CD4-positive, alpha-beta memory T cell (primary cell): ENCODE measurements at regions of chr14 and their contacts with region 1.

Region 1: DNA sequence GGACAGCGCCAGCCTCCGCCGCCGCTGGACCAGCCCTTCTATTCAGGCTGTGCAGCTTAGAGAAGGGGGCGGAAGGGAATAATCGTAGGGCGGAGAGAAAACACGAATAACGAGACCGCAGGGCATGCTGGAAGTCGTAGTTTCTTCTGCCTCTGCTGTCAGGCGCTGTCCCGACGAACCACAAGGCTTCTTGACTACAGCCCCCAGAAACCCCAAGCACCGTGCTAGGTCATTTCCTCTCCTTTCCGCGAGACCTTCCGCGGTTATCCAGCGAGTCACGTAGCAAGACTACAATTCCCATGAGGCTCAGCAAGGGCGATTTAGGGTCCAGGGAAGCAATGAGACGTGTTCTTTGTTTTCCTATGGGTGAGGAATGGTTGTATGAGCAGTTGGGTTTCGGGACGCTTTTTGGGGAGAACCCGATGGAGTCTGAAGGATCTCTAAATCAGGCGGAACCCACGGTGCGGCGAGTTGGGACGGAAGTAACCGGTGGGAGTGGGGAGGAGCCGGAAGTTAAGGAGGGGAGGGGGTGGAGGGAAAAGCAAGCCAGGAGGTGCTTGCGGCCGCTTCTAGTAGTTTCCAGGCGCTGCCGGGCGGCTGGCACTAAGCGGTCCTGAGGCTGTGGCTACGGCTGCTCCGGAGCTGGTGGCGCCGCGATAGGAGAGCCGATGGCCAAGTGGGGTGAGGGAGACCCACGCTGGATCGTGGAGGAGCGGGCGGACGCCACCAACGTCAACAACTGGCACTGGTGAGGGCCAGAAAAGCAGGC is at the starts of genes AHSA1 and VIPAS39:
- DNase-seq: peak; percentile 96 to 99 (median 96)
- H3K4me3 ChIP-seq: peak within 1 kb of the TSS; percentile 99 to 100
- H3K4me3 Mint-ChIP-seq: peak within 1 kb of the TSS; percentile 100
- H3K27ac ChIP-seq: peak within 1 kb of the TSS; percentile 86
- H3K27ac Mint-ChIP-seq: peak within 1 kb of the TSS; percentile 94 to 100 (median 100)
- H3K4me1 ChIP-seq: peaks cover 29% of the 10 kb centered on the region
- H3K4me1 Mint-ChIP-seq: peaks cover 28 to 50% (median 36%) of the 10 kb centered on the region in 4 donors
- H3K27me3 ChIP-seq: no peaks in the 10 kb centered on the region
- H3K27me3 Mint-ChIP-seq: no peaks in the 10 kb centered on the region
- total RNA-seq, gene AHSA1: 88.5 to 89.9 TPM
- total RNA-seq, gene VIPAS39: 18.6 to 22.5 TPM

Region 2: GRCh38 chr14:76151398-76152339 is 1306.0 kb before region 1 on chr14 and contains the start of gene GPATCH2L:
- CTCF ChIA-PET with region 1: no interaction called
- POLR2A ChIA-PET with region 1: no interaction called
- intact Hi-C with region 1: loop called (anchors 5 kb)
- DNase-seq: peak; percentile 94 to 97 (median 96)
- H3K4me3 ChIP-seq: peak within 1 kb of the TSS; percentile 85 to 88
- H3K4me3 Mint-ChIP-seq: peak within 1 kb of the TSS; percentile 92 to 99 (median 96)
- H3K27ac ChIP-seq: peak within 1 kb of the TSS; percentile 94
- H3K27ac Mint-ChIP-seq: peak within 1 kb of the TSS; percentile 93 to 99 (median 97)
- H3K4me1 ChIP-seq: peaks cover 51% of the 10 kb centered on the region
- H3K4me1 Mint-ChIP-seq: peaks cover 37 to 59% (median 49%) of the 10 kb centered on the region in 4 donors
- H3K27me3 ChIP-seq: no peaks in the 10 kb centered on the region
- H3K27me3 Mint-ChIP-seq: no peaks in the 10 kb centered on the region
- total RNA-seq, gene GPATCH2L: 66.0 to 70.1 TPM

Region 3: GRCh38 chr14:76812211-76813044 is 645.3 kb before region 1 on chr14 and contains the start of gene ANGEL1:
- CTCF ChIA-PET with region 1: no interaction called
- POLR2A ChIA-PET with region 1: no interaction called
- intact Hi-C with region 1: loop called (anchors 1 kb)
- DNase-seq: peak; percentile 94 to 97 (median 96)
- H3K4me3 ChIP-seq: peak within 1 kb of the TSS; percentile 43 to 78
- H3K4me3 Mint-ChIP-seq: peak within 1 kb of the TSS; percentile 87 to 98 (median 94)
- H3K27ac ChIP-seq: peak within 1 kb of the TSS; percentile 76
- H3K27ac Mint-ChIP-seq: peak within 1 kb of the TSS; percentile 93 to 98 (median 95)
- H3K4me1 ChIP-seq: peaks cover 24% of the 10 kb centered on the region
- H3K4me1 Mint-ChIP-seq: peaks cover 21 to 37% (median 28%) of the 10 kb centered on the region in 4 donors
- H3K27me3 ChIP-seq: no peaks in the 10 kb centered on the region
- H3K27me3 Mint-ChIP-seq: peaks cover 0 to 2% of the 10 kb centered on the region in 2 donors
- total RNA-seq, gene ANGEL1: 26.1 to 28.0 TPM

Region 4: GRCh38 chr14:77124345-77125280 is 333.1 kb before region 1 on chr14:
- CTCF ChIA-PET with region 1: no interaction called
- POLR2A ChIA-PET with region 1: no interaction called
- intact Hi-C with region 1: no loop called
- DNase-seq: peak; percentile 72 to 83 (median 79)
- H3K4me3 ChIP-seq: peak overlapping the region; percentile 66 to 82
- H3K4me3 Mint-ChIP-seq: peak overlapping the region; percentile 85 to 92 (median 88)
- H3K27ac ChIP-seq: peak overlapping the region; percentile 45
- H3K27ac Mint-ChIP-seq: peak overlapping the region; percentile 50 to 95 (median 91)
- H3K4me1 ChIP-seq: peaks cover 57% of the 10 kb centered on the region
- H3K4me1 Mint-ChIP-seq: peaks cover 17 to 59% (median 45%) of the 10 kb centered on the region in 4 donors
- H3K27me3 ChIP-seq: no peaks in the 10 kb centered on the region
- H3K27me3 Mint-ChIP-seq: peaks cover 6 to 13% of the 10 kb centered on the region in 2 donors

Region 5: GRCh38 chr14:77376771-77377501 is 80.8 kb before region 1 on chr14 and contains the starts of genes SAMD15 and TMED8:
- CTCF ChIA-PET with region 1: interaction called, 8 read pairs
- POLR2A ChIA-PET with region 1: interaction called, 6 read pairs
- intact Hi-C with region 1: loop called (anchors 1 kb)
- DNase-seq: peak; percentile 81 to 87 (median 87)
- H3K4me3 ChIP-seq: peak within 1 kb of the TSS; percentile 94 to 97
- H3K4me3 Mint-ChIP-seq: peak within 1 kb of the TSS; percentile 85 to 94 (median 90)
- H3K27ac ChIP-seq: peak within 1 kb of the TSS; percentile 74
- H3K27ac Mint-ChIP-seq: peak within 1 kb of the TSS in 6 of 7 donors; percentile 84 to 95 (median 92)
- H3K4me1 ChIP-seq: peaks cover 46% of the 10 kb centered on the region
- H3K4me1 Mint-ChIP-seq: peaks cover 30 to 42% (median 36%) of the 10 kb centered on the region in 4 donors
- H3K27me3 ChIP-seq: no peaks in the 10 kb centered on the region
- H3K27me3 Mint-ChIP-seq: no peaks in the 10 kb centered on the region
- total RNA-seq, gene SAMD15: 0.11 to 0.38 TPM
- total RNA-seq, gene TMED8: 8.3 to 8.6 TPM

Region 6: GRCh38 chr14:77707724-77708408 is 250.2 kb after region 1 on chr14 and contains the starts of genes ALKBH1 and SLIRP:
- CTCF ChIA-PET with region 1: interaction called, 7 read pairs
- POLR2A ChIA-PET with region 1: interaction called, 5 read pairs
- intact Hi-C with region 1: loop called (anchors 1 kb)
- DNase-seq: peak; percentile 87 to 91 (median 87)
- H3K4me3 ChIP-seq: peak within 1 kb of the TSS; percentile 90 to 97
- H3K4me3 Mint-ChIP-seq: peak within 1 kb of the TSS; percentile 95 to 100 (median 98)
- H3K27ac ChIP-seq: peak within 1 kb of the TSS; percentile 80
- H3K27ac Mint-ChIP-seq: peak within 1 kb of the TSS; percentile 83 to 99 (median 96)
- H3K4me1 ChIP-seq: peaks cover 33% of the 10 kb centered on the region
- H3K4me1 Mint-ChIP-seq: peaks cover 26 to 49% (median 38%) of the 10 kb centered on the region in 4 donors
- H3K27me3 ChIP-seq: no peaks in the 10 kb centered on the region
- H3K27me3 Mint-ChIP-seq: no peaks in the 10 kb centered on the region
- total RNA-seq, gene ALKBH1: 16.2 to 20.1 TPM
- total RNA-seq, gene SLIRP: 37.5 to 40.6 TPM

Region 7: DNA sequence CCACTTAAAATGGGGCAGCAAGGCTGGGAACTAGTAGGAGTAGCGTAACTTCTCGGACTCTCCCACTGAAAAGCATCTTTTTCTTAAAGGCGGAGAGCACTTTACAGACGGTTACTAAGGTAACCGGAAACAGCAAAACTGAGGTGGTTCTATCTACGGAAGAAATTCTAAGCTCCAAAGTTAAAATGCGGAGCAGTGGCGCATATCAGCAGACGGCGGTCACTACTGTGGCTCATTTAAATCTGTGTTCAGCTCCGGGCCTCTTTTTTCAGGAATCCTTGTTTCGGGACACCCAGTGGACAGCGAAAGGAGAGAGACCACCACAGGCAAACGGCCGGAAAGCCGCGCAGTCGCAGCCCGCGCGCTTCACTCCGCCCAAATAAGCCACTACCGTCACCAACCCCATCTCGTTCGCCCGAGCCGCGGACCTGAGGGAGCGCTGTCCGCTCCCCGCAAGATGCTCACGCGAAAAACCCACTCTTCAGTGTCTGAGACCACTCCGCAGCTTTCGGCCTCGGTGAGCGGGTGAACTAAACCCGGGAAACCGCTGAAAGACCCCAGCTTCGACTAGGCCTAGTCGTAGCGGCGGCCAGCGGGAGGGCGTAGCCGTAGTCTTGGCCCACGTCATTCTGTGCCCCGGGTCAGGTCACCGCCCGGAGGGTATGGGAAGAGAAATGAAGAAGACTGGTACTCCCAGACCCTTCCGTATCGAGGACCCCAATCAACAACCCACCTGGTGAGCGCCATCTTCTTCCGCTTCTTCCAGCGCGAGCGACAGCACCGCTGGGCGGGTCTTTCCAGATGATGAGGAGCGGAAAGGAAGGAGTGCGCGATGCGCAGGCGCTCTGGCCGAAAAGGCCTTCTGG is 302.9 kb after region 1 on chr14 and contains the start of gene SNW1:
- CTCF ChIA-PET with region 1: no interaction called
- POLR2A ChIA-PET with region 1: interaction called, 4 read pairs
- intact Hi-C with region 1: loop called (anchors 1 kb)
- DNase-seq: peak; percentile 89 to 94 (median 92)
- H3K4me3 ChIP-seq: peak within 1 kb of the TSS; percentile 94 to 98
- H3K4me3 Mint-ChIP-seq: peak within 1 kb of the TSS; percentile 95 to 98 (median 97)
- H3K27ac ChIP-seq: peak within 1 kb of the TSS; percentile 99
- H3K27ac Mint-ChIP-seq: peak within 1 kb of the TSS; percentile 97 to 100 (median 98)
- H3K4me1 ChIP-seq: peaks cover 52% of the 10 kb centered on the region
- H3K4me1 Mint-ChIP-seq: peaks cover 23 to 63% (median 39%) of the 10 kb centered on the region in 4 donors
- H3K27me3 ChIP-seq: no peaks in the 10 kb centered on the region
- H3K27me3 Mint-ChIP-seq: no peaks in the 10 kb centered on the region
- total RNA-seq, gene SNW1: 92.1 to 99.7 TPM

Region 8: DNA sequence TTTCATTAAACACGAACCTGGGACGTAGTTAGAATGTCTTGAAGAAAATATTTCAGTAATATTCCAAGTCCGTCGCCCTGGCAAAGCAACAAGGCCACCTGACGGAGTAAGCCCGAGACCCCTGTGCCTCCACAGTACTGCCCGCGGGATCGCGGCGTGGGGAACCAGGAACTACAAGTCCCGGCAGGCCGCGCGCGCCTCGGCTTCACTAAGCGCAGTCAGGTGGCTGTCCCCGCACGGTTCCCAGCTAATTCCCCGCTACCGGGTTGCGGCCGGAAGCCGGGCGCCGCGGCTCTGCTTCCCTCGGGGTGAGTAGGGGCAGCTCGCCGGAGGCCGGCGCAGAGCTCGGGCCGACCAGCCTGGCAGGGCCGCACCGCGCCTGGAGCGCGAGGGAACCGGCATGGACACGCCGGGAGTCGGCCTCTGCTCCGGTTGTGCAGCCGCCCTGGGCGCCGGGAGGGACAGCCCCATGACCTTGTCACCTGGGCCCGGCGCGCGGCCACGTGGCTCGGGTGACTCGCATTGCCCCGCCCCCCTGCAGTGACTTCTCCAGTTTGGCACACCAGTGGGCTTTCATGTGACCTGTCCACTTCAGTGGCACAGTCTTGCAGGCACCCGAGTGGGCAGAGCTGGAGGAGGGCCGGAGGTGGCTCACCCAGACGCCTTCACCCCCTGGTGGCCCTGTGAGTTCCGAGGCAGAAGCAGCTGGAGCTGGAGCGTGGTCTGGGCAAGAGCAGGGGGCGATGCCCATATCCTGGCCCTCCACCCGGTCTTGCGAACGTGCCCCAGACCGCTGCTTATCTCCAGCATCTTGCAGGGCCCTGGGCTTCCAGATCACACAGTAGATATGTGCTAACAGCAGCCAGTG is 342.4 kb after region 1 on chr14 and contains the start of gene ADCK1:
- CTCF ChIA-PET with region 1: no interaction called
- POLR2A ChIA-PET with region 1: no interaction called
- intact Hi-C with region 1: loop called (anchors 1 kb)
- DNase-seq: peak; percentile 83 to 88 (median 85)
- H3K4me3 ChIP-seq: peak within 1 kb of the TSS; percentile 83 to 87
- H3K4me3 Mint-ChIP-seq: peak within 1 kb of the TSS; percentile 83 to 90 (median 86)
- H3K27ac ChIP-seq: peak within 1 kb of the TSS; percentile 71
- H3K27ac Mint-ChIP-seq: peak within 1 kb of the TSS; percentile 77 to 93 (median 91)
- H3K4me1 ChIP-seq: peaks cover 7% of the 10 kb centered on the region
- H3K4me1 Mint-ChIP-seq: peaks cover 2 to 11% (median 9%) of the 10 kb centered on the region in 4 donors
- H3K27me3 ChIP-seq: no peaks in the 10 kb centered on the region
- H3K27me3 Mint-ChIP-seq: no peaks in the 10 kb centered on the region
- total RNA-seq, gene ADCK1: 5.3 to 5.6 TPM

Region 9: DNA sequence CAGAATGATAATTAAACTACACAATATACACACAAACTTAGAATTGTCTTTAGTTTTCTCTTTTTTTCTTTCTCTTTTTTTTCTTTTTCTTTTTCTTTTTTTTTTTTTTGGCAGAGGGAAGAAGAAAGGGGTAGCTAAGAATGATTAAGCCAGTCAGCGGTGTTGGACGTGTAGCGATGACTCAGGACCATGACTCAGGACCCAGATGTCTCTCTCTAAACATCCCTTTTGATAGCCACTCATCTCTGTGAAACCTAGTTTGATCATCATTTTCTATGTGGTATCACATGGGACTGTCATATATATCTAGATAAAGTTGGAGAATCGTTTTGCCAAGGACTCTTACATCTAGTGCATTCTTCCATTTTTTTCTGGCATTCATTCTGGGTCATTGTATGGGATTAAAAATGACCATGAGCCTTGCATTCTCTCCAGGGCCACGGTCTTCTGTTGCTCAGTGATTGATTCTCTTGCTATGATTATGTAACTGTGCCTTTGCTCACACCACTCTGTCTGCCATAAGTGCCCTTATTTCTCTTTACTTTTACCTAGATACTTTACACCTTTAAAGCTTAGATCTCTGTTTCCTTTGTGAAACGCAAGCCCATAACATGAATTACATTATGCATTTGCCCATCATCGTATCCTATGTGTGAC is 685.9 kb after region 1 on chr14:
- CTCF ChIA-PET with region 1: no interaction called
- POLR2A ChIA-PET with region 1: no interaction called
- intact Hi-C with region 1: no loop called
- DNase-seq: no peak
- H3K4me3 ChIP-seq: no peak overlapping the region
- H3K4me3 Mint-ChIP-seq: no peak overlapping the region
- H3K27ac ChIP-seq: no peak overlapping the region
- H3K27ac Mint-ChIP-seq: no peak overlapping the region
- H3K4me1 ChIP-seq: no peaks in the 10 kb centered on the region
- H3K4me1 Mint-ChIP-seq: no peaks in the 10 kb centered on the region
- H3K27me3 ChIP-seq: no peaks in the 10 kb centered on the region
- H3K27me3 Mint-ChIP-seq: peaks cover under 1 to 5% of the 10 kb centered on the region in 2 donors